Left cardiac atrium (tissue), 4 donors: ENCODE measurements at regions of chr10 and their contacts with region 1.

Region 1: GRCh38 chr10:70227548-70228320 is 5.5 kb downstream of the PPA1 start:
- DNase-seq: no peak
- ATAC-seq: no peak

Region 2: DNA sequence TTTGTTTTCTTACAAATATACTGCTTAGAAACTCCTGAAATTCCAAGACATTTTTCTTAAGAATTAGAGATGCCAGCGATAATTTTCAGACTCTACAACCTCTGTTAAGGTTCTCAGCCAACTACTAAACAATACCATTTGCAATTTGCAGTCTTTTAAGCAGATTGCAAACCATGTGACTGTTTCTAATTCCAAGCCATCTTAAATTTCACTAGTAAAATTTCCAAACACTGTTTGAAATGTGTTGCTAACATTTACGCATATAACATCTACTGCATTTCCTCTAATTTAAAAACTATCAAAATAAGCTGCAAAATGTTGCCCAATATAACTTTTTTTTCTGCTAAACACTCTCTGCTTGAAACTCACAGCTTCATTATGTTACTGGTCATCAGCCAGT is 231.1 kb before region 1 on chr10:
- intact Hi-C with region 1: no loop called
- DNase-seq: no peak
- ATAC-seq: no peak

Region 3: GRCh38 chr10:70272925-70273316 is 45.2 kb after region 1 on chr10:
- intact Hi-C with region 1: loop called in 1 of 2 experiments (anchors 10 kb)
- DNase-seq: no peak
- ATAC-seq: peak in 1 of 2 donors; percentile 29